Mammary epithelial cell (primary cell): ENCODE measurements at regions of chr1 and their contacts with region 1.

Region 1: GRCh38 chr1:119613769-119614720 is 34.0 kb downstream of the ZNF697 start:
- DNase-seq: peak; percentile 76
- H3K4me3 ChIP-seq: no peak overlapping the region
- H3K27ac ChIP-seq: no peak overlapping the region
- H3K4me1 ChIP-seq: no peaks in the 10 kb centered on the region
- H3K27me3 ChIP-seq: no peaks in the 10 kb centered on the region
- CTCF ChIP-seq: peak; percentile 59 to 85

Region 2: DNA sequence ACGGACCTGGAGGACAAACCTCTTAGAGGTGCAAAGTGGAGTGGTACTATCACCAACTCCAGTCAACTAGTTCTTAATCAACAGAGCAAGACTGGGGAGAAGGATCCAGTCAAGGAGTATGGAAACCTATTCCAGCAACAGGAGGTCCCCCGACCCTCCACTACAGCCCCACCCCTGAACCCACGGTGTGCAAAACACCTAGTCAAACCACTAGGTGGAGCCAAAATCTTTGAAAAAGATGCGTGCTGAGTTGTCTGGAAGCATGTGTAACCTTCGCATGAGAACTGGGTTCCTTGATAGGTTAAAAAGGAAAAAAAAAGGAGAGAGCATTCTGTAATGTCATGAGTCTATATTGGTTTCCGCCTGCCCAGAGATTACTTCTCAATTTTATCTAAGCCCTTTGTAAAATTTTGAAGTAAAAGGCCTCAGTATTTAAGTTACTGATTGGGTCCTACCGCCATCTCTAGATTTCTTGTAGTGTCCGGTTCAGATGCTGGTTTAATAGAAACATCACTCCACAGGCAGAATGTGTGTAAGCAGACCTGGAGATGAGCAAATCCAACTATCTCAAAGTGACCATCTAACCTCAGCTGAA is 327.4 kb before region 1 on chr1:
- CTCF ChIA-PET with region 1: no interaction called
- dilution Hi-C with region 1: no loop called
- in situ Hi-C with region 1: no loop called
- intact Hi-C with region 1: loop called (anchors 5 kb)
- DNase-seq: peak; percentile 51
- H3K4me3 ChIP-seq: no peak overlapping the region
- H3K27ac ChIP-seq: no peak overlapping the region
- H3K4me1 ChIP-seq: peaks cover 17% of the 10 kb centered on the region
- H3K27me3 ChIP-seq: no peaks in the 10 kb centered on the region
- CTCF ChIP-seq: peak; percentile 49 to 74

Region 3: GRCh38 chr1:119492763-119493162 is 121.3 kb before region 1 on chr1:
- CTCF ChIA-PET with region 1: no interaction called
- dilution Hi-C with region 1: no loop called
- in situ Hi-C with region 1: no loop called
- intact Hi-C with region 1: no loop called
- DNase-seq: no peak
- H3K4me3 ChIP-seq: no peak overlapping the region
- H3K27ac ChIP-seq: no peak overlapping the region
- H3K4me1 ChIP-seq: no peaks in the 10 kb centered on the region
- H3K27me3 ChIP-seq: no peaks in the 10 kb centered on the region
- CTCF ChIP-seq: no peak

Region 4: DNA sequence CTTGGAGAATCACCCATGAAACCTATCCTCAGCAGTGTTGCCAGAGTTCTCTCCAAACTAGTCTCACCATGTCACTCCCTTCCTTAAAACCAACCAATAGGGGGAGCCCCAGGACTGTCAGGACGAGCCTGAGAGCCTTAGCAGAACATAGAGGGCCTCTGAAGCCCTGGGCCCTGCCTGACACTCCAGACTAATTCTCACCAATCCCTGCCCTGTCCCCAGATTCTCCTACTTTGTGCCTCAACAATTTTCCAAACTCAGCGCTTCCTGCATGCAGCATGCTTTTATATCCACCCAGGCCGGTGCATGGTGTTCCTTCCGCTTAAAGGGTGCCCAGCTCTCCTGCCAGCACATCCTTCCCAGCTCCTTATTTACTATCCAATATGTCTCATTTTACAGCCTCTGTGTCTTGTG is 64.3 kb before region 1 on chr1:
- CTCF ChIA-PET with region 1: no interaction called
- dilution Hi-C with region 1: no loop called
- in situ Hi-C with region 1: no loop called
- intact Hi-C with region 1: loop called (anchors 1 kb)
- DNase-seq: peak; percentile 73
- H3K4me3 ChIP-seq: no peak overlapping the region
- H3K27ac ChIP-seq: no peak overlapping the region
- H3K4me1 ChIP-seq: peaks cover 17% of the 10 kb centered on the region
- H3K27me3 ChIP-seq: no peaks in the 10 kb centered on the region
- CTCF ChIP-seq: peak; percentile 64 to 79

Region 5: DNA sequence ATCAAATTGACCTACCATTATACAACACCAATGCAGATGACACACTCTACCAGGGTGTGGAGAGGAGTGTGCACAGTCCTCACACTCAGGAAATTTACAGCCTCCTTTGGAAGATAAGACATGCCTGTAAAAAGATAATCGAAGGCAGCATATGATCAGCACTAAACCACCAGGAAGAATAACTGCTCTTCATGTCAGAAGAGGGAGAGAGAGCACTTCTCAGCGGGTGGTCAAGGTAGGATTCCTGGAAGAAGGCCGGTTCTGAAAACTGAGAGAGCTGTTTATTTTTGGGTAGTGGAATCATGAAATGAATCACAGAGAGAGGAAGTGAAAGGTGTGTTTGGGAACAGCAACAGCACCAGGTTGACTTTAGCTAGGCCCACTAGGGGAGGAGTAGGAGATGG is 48.0 kb after region 1 on chr1:
- CTCF ChIA-PET with region 1: interaction called, 5 read pairs
- dilution Hi-C with region 1: no loop called
- in situ Hi-C with region 1: loop called (anchors 5 kb)
- intact Hi-C with region 1: loop called (anchors 1 kb)
- DNase-seq: no peak
- H3K4me3 ChIP-seq: no peak overlapping the region
- H3K27ac ChIP-seq: no peak overlapping the region
- H3K4me1 ChIP-seq: no peaks in the 10 kb centered on the region
- H3K27me3 ChIP-seq: no peaks in the 10 kb centered on the region
- CTCF ChIP-seq: no peak

Region 6: DNA sequence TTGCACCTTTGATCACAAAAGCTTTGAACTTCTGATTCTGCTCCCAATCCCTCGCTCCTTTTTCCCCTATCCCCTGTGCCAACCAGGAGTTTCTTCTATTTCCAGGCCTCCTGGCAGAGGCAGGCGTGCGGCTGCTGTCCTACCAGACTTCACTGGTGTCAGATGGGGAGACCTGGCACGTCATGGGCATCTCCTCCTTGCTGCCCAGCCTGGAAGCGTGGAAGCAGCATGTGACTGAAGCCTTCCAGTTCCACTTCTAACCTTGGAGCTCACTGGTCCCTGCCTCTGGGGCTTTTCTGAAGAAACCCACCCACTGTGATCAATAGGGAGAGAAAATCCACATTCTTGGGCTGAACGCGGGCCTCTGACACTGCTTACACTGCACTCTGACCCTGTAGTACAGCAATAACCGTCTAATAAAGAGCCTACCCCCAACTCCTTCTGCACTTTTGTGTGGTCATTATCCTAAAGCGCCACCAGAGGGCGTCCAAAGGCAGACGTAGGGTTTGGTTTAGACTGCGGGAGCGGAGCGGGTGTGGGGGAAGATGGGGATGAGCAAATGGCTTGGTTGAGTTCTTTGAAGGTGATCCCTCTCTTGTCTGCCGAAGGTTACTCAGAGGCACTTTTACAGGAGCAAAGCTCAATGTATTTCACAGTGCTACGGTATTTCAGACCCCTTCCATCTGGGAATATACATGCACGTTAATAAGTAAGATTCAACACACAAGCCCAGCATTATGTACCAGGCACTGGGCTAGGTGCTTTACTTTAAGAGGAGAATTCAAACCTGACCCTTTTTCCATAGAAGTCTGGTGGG is 129.9 kb after region 1 on chr1:
- CTCF ChIA-PET with region 1: no interaction called
- dilution Hi-C with region 1: no loop called
- in situ Hi-C with region 1: no loop called
- intact Hi-C with region 1: loop called (anchors 1 kb)
- DNase-seq: peak; percentile 67
- H3K4me3 ChIP-seq: no peak overlapping the region
- H3K27ac ChIP-seq: no peak overlapping the region
- H3K4me1 ChIP-seq: peaks cover 25% of the 10 kb centered on the region
- H3K27me3 ChIP-seq: no peaks in the 10 kb centered on the region
- CTCF ChIP-seq: peak; percentile 77 to 84

Region 7: GRCh38 chr1:119906927-119907652 is 293.0 kb after region 1 on chr1:
- CTCF ChIA-PET with region 1: no interaction called
- dilution Hi-C with region 1: no loop called
- in situ Hi-C with region 1: no loop called
- intact Hi-C with region 1: no loop called
- DNase-seq: no peak
- H3K4me3 ChIP-seq: no peak overlapping the region
- H3K27ac ChIP-seq: no peak overlapping the region
- H3K4me1 ChIP-seq: peaks cover 5% of the 10 kb centered on the region
- H3K27me3 ChIP-seq: no peaks in the 10 kb centered on the region
- CTCF ChIP-seq: no peak

Region 8: GRCh38 chr1:119929643-119930315 is 315.7 kb after region 1 on chr1:
- CTCF ChIA-PET with region 1: no interaction called
- dilution Hi-C with region 1: no loop called
- in situ Hi-C with region 1: no loop called
- intact Hi-C with region 1: loop called (anchors 5 kb)
- DNase-seq: peak; percentile 35
- H3K4me3 ChIP-seq: no peak overlapping the region
- H3K27ac ChIP-seq: no peak overlapping the region
- H3K4me1 ChIP-seq: no peaks in the 10 kb centered on the region
- H3K27me3 ChIP-seq: no peaks in the 10 kb centered on the region
- CTCF ChIP-seq: no peak